Naive thymus-derived CD4-positive, alpha-beta T cell (primary cell): ENCODE measurements at regions of chr12 and their contacts with region 1.

Region 1: GRCh38 chr12:49673446-49674317 is 33.5 kb downstream of the FMNL3 start:
- DNase-seq: peak in 3 of 9 donors; percentile 11 to 26 (median 12)
- ATAC-seq: no peak
- H3K4me3 ChIP-seq: no peak overlapping the region
- H3K4me3 Mint-ChIP-seq: peak overlapping the region; percentile 18 to 85 (median 70)
- H3K27ac ChIP-seq: peak overlapping the region; percentile 85
- H3K27ac Mint-ChIP-seq: peak overlapping the region; percentile 71 to 99 (median 96)
- H3K4me1 ChIP-seq: peaks cover 39 to 64% of the 10 kb centered on the region in 2 donors
- H3K4me1 Mint-ChIP-seq: peaks cover 60 to 92% (median 92%) of the 10 kb centered on the region in 7 donors
- H3K27me3 ChIP-seq: no peaks in the 10 kb centered on the region
- H3K27me3 Mint-ChIP-seq: no peaks in the 10 kb centered on the region

Region 2: DNA sequence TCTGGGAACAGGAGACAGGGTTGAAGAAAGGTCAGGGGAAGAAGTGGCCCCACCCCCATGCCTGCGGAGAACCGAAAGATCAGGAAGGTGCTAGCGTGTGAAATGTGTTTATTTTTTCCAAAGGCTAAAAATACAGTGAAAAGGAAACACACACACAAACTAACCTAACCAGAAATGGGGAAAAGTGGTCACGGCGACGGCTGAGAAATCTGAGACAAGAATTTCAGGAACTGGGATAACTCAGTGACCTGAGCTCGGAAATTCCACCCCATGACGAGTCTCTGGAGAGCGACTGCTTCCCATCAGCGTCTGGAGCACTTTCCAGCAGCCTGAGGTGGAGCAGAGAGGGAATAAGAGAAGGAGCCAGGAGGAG is 791.4 kb before region 1 on chr12:
- CTCF ChIA-PET with region 1: no interaction called
- POLR2A ChIA-PET with region 1: no interaction called
- intact Hi-C with region 1: no loop called
- DNase-seq: no peak
- ATAC-seq: no peak
- H3K4me3 ChIP-seq: no peak overlapping the region
- H3K4me3 Mint-ChIP-seq: peak overlapping the region in 1 of 10 donors; percentile 2
- H3K27ac ChIP-seq: no peak overlapping the region
- H3K27ac Mint-ChIP-seq: no peak overlapping the region
- H3K4me1 ChIP-seq: no peaks in the 10 kb centered on the region
- H3K4me1 Mint-ChIP-seq: peaks cover 0 to 11% (median 0%) of the 10 kb centered on the region in 7 donors
- H3K27me3 ChIP-seq: peaks cover 0 to 7% of the 10 kb centered on the region in 2 donors
- H3K27me3 Mint-ChIP-seq: peaks cover 12 to 45% (median 20%) of the 10 kb centered on the region in 5 donors

Region 3: GRCh38 chr12:49651855-49652254 is 21.8 kb before region 1 on chr12:
- CTCF ChIA-PET with region 1: interaction called, 5 read pairs
- POLR2A ChIA-PET with region 1: interaction called, 36 read pairs
- intact Hi-C with region 1: no loop called
- DNase-seq: no peak
- ATAC-seq: no peak
- H3K4me3 ChIP-seq: no peak overlapping the region
- H3K4me3 Mint-ChIP-seq: no peak overlapping the region
- H3K27ac ChIP-seq: no peak overlapping the region
- H3K27ac Mint-ChIP-seq: peak overlapping the region in 7 of 9 donors; percentile 27 to 88 (median 62)
- H3K4me1 ChIP-seq: peaks cover 0 to 16% of the 10 kb centered on the region in 2 donors
- H3K4me1 Mint-ChIP-seq: peaks cover 26 to 59% (median 49%) of the 10 kb centered on the region in 7 donors
- H3K27me3 ChIP-seq: no peaks in the 10 kb centered on the region
- H3K27me3 Mint-ChIP-seq: no peaks in the 10 kb centered on the region

Region 4: DNA sequence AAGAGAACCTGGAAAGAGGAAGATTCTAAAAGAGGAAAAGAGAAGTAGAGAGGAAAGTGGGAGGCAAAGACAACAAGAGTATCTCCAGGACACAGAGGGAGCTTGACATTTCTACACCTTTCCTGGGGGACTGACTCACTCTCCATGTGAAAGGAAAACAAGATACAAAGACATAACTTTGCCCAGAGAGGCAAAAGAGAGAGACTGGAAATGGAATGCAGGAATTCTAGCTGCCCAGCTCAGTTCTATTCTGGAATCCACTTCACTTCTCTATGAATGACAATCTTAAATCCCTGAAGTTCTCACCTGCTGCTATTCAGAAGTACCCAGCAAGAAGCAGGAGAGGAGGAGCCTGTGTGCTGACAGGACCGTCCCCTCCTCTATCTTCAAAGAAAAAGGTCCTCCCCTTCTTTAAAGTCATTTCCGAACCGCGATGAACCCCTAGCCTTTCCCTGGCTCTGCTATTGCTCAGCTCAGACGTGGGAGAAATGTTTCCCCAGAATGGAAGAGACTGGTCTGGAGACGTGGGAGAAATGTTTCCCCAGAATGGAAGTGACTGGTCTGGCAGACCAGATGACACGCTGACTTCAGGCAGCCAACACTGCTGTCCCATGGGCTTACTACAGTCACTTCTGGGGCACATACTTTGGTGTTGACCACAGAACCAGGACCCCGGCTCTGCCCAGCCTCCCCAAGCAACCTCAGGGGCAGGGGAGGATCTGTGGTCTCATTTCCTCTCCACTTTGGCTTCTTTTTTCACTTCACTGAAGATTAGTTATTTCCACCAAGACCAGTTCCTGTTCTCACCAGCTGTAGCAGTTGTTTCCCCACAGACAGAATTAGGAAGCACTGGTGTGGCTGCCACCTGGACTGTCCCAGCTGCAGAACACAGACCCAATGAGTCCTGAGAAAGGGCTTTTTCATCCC is 25.2 kb after region 1 on chr12:
- CTCF ChIA-PET with region 1: interaction called, 48 read pairs
- POLR2A ChIA-PET with region 1: interaction called, 131 read pairs
- intact Hi-C with region 1: loop called (anchors 2 kb)
- DNase-seq: peak in 8 of 9 donors; percentile 15 to 54 (median 24)
- ATAC-seq: peak; percentile 75
- H3K4me3 ChIP-seq: peak overlapping the region; percentile 54
- H3K4me3 Mint-ChIP-seq: peak overlapping the region; percentile 75 to 90 (median 84)
- H3K27ac ChIP-seq: peak overlapping the region; percentile 34
- H3K27ac Mint-ChIP-seq: peak overlapping the region; percentile 32 to 93 (median 83)
- H3K4me1 ChIP-seq: peaks cover 14 to 39% of the 10 kb centered on the region in 2 donors
- H3K4me1 Mint-ChIP-seq: peaks cover 44 to 74% (median 65%) of the 10 kb centered on the region in 7 donors
- H3K27me3 ChIP-seq: no peaks in the 10 kb centered on the region
- H3K27me3 Mint-ChIP-seq: no peaks in the 10 kb centered on the region